ENCODE measurements at regions of chr7 and their contacts with region 1.

Region 1: DNA sequence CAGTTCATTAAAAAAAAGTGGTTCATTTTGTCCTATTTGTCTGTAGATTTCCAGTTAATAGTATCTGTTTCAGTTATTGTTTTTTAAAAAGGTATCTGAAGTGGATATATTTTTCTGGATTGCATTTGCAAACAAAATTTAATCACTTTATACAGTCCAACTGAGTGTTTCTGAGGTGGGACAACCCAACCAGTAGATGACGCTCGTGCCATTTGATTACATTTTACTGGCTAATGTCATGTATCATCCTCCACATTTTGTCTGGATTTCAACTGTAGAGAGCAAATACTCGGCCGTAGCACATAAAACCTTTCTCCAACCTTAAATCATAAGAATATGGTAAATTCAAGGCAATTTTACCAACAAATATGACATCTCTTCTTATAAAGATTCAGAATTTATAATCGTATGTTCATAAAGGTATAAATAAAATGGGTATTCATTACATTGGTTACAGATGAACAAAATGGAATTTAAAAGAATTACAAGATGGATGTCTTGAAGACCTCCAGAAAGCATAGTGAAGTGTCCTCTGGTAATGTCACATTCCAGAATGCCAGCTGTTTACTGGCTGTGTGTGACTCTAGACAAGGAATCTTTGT is 789.0 kb downstream of the PHTF2 start:
- DNase-seq: peak; percentile 48
- H3K4me3 Mint-ChIP-seq: no peak overlapping the region
- H3K27ac Mint-ChIP-seq: no peak overlapping the region
- H3K4me1 Mint-ChIP-seq: no peaks in the 10 kb centered on the region
- H3K27me3 Mint-ChIP-seq: no peaks in the 10 kb centered on the region
- CTCF ChIP-seq: no peak

Region 2: GRCh38 chr7:78634093-78634492 is 46.5 kb after region 1 on chr7:
- CTCF ChIA-PET with region 1: no interaction called
- intact Hi-C with region 1: no loop called
- DNase-seq: peak; percentile 9
- H3K4me3 Mint-ChIP-seq: no peak overlapping the region
- H3K27ac Mint-ChIP-seq: peak overlapping the region; percentile 77
- H3K4me1 Mint-ChIP-seq: peaks cover 9% of the 10 kb centered on the region
- H3K27me3 Mint-ChIP-seq: no peaks in the 10 kb centered on the region
- CTCF ChIP-seq: no peak

Region 3: DNA sequence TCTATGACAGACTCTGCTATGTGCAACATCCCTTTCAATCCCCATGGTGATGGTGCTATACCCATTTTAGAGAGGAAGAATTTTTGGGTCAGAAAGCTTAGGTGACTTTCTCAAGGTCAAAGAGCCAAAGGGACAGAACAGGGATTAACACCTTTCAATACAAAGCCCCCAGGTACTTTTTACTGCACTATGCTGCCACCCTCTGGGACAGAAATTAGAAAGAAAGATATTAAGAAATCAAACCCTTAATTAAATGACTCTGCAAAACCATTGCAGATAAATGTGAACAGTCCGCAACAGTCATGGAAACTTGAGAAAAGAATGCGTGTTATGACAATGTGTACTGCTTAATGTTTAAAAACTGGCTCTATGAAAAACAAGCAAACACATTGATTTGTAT is 192.2 kb after region 1 on chr7:
- CTCF ChIA-PET with region 1: no interaction called
- intact Hi-C with region 1: loop called (anchors 1 kb)
- DNase-seq: no peak
- H3K4me3 Mint-ChIP-seq: no peak overlapping the region
- H3K27ac Mint-ChIP-seq: no peak overlapping the region
- H3K4me1 Mint-ChIP-seq: no peaks in the 10 kb centered on the region
- H3K27me3 Mint-ChIP-seq: no peaks in the 10 kb centered on the region
- CTCF ChIP-seq: no peak

Region 4: GRCh38 chr7:78924581-78924980 is 337.0 kb after region 1 on chr7:
- CTCF ChIA-PET with region 1: no interaction called
- intact Hi-C with region 1: loop called (anchors 2 kb)
- DNase-seq: peak; percentile 1
- H3K4me3 Mint-ChIP-seq: no peak overlapping the region
- H3K27ac Mint-ChIP-seq: no peak overlapping the region
- H3K4me1 Mint-ChIP-seq: no peaks in the 10 kb centered on the region
- H3K27me3 Mint-ChIP-seq: no peaks in the 10 kb centered on the region
- CTCF ChIP-seq: no peak

Region 5: DNA sequence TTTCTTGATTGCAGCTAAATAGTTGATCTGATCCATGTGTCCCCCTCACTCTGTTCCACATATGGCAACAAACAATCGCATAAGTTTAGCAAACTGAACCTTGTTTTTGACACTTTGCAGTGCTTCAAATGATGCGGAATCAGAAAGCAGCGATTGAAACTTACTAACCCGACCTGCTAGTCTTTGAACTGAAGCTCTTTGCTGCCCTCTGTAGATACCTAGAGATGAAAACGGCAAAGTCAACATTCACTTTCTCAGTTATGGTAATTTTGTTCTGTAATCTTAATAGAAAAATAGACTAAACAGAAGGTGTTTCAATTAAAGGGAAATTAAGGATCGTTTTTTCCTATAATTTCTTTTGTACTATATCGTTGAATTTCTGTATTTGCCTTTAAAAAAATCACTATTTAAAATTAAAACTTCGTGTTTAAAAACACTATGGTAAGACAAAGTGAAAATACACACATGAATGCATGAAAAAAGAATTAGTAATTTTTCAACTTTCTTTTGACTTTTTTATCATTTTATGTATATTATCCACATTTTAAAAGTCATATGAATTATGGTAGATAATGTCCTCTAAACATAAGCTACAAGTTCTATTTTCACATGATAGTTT is 589.4 kb after region 1 on chr7:
- CTCF ChIA-PET with region 1: interaction called, 4 read pairs
- intact Hi-C with region 1: loop called (anchors 2 kb)
- DNase-seq: peak; percentile 20
- H3K4me3 Mint-ChIP-seq: no peak overlapping the region
- H3K27ac Mint-ChIP-seq: no peak overlapping the region
- H3K4me1 Mint-ChIP-seq: no peaks in the 10 kb centered on the region
- H3K27me3 Mint-ChIP-seq: no peaks in the 10 kb centered on the region
- CTCF ChIP-seq: peak; percentile 21

Measured in Calu3 (cell line).